Lower lobe of right lung (tissue), 2 donors: ENCODE measurements at regions of chr2 and their contacts with region 1.

Region 1: DNA sequence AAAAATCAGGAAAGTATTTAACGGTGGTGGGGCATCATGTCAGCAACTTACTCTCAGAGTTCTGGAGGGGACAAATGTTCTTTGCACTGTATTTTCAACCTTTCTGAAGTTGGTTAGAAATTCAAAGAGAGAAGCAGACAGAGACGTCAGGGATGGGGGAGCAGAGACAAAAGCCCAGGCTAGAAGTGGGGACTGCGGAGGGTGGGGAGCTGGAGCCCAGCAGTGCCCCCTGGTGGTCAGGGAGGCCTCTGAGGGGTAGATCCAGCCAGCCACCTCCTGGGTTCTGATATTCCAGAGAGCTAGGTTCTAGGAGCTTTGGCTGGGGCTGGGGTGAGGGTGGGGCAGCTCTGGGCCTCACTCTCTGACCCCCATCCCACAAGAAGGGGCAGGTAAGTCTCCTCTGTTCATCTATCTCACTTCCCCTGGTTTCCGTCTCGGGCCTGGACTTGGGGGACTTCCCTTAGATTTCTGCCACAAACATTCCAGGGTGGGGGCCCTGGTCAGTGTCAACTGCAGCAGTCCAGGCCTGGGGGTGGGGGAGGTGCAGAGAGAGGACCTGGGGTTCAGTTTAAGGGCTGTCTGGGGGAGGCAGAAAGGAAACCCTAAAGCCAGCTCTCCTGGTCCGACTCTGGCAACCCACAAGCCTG is 8.9 kb downstream of the TNS1 start:
- DNase-seq: peak; percentile 78
- ATAC-seq: peak; percentile 81 to 82
- H3K4me3 ChIP-seq: no peak overlapping the region
- H3K27ac ChIP-seq: peak overlapping the region; percentile 31
- H3K4me1 ChIP-seq: peaks cover 38% of the 10 kb centered on the region
- H3K27me3 ChIP-seq: no peaks in the 10 kb centered on the region
- CTCF ChIP-seq: peak; percentile 78

Region 2: GRCh38 chr2:217497843-217498377 is 496.0 kb before region 1 on chr2:
- intact Hi-C with region 1: no loop called
- DNase-seq: no peak
- ATAC-seq: no peak
- H3K4me3 ChIP-seq: no peak overlapping the region
- H3K27ac ChIP-seq: no peak overlapping the region
- H3K4me1 ChIP-seq: no peaks in the 10 kb centered on the region
- H3K27me3 ChIP-seq: no peaks in the 10 kb centered on the region
- CTCF ChIP-seq: no peak

Region 3: GRCh38 chr2:217798743-217799562 is 195.0 kb before region 1 on chr2:
- intact Hi-C with region 1: loop called (anchors 10 kb)
- DNase-seq: no peak
- ATAC-seq: peak; percentile 20 to 65
- H3K4me3 ChIP-seq: no peak overlapping the region
- H3K27ac ChIP-seq: peak overlapping the region; percentile 58
- H3K4me1 ChIP-seq: peaks cover 52% of the 10 kb centered on the region
- H3K27me3 ChIP-seq: no peaks in the 10 kb centered on the region
- CTCF ChIP-seq: no peak

Region 4: DNA sequence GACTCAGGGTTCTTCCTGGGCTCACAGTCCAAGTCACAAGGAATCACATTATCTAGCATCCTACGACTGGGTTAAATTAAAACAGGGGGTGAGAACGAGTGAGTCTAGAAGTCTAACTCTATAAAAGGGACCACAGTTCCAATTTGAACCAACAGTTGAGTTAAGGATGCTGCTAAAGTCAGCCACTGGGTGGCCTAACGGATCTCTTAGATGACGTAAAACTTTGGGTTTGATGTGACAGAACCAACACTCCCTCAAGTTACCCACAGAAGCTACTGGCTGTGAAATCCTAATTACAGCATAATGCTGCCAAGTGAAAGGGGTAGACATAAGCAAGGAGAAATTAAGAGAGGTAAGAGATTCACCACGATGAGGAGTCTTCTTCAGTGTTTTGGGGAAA is 42.4 kb after region 1 on chr2:
- intact Hi-C with region 1: no loop called
- DNase-seq: no peak
- ATAC-seq: no peak
- H3K4me3 ChIP-seq: no peak overlapping the region
- H3K27ac ChIP-seq: no peak overlapping the region
- H3K4me1 ChIP-seq: peaks cover 10% of the 10 kb centered on the region
- H3K27me3 ChIP-seq: peaks cover 14% of the 10 kb centered on the region
- CTCF ChIP-seq: no peak